BJ (cell line): ENCODE measurements at regions of chr5 and their contacts with region 1.

Region 1: DNA sequence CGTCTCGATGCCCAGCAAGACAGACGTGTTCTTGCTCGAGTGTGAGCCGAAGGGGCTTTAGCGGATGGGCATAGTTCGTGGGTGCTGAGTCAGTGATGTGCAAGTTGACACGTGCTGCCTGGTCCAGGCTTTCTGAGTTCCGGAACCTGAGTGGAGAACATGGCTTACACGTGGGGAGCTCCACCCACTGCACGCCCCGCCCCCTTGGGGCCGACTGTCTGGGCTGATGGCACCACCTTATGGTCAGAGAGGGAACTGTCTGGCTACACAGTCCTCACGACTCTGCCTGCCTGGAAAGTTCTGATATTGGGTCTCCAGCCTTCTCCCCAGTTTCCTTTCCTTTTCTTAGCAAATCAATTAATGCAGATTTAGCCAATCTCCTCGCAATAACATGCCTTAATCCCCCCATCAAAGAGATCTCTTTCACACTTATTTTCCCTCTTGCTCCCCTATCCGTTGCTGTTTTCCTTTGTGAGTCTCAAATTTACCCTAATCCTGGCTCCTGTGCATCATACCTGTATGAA is 3.8 kb upstream of the STC2 start:
- DNase-seq: no peak
- H3K4me3 ChIP-seq: no peak overlapping the region
- H3K27me3 ChIP-seq: no peaks in the 10 kb centered on the region
- CTCF ChIP-seq: peak; percentile 89

Region 2: DNA sequence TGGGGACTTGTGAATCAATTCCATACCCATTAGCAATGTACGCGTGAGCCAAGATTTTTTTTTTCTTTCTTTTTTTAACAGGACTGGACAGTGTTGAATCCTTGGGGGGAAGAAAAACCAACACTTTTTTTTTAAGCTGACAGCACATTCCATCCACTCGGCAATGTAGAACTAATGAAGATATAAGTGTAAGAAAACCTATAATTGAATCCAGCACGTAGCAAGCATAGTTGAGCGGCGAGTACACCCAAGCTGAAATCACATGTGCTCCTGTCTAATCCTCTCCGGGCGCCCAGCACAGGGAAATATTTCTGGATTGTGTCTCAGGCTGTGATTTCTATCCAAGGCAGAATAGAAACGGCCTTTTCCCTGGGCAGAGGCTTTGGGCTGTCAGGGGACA is 166.3 kb after region 1 on chr5:
- CTCF ChIA-PET with region 1: interaction called, 3 read pairs
- POLR2A ChIA-PET with region 1: interaction called, 10 read pairs
- DNase-seq: peak; percentile 74
- H3K4me3 ChIP-seq: no peak overlapping the region
- H3K27me3 ChIP-seq: no peaks in the 10 kb centered on the region
- CTCF ChIP-seq: no peak

Region 3: DNA sequence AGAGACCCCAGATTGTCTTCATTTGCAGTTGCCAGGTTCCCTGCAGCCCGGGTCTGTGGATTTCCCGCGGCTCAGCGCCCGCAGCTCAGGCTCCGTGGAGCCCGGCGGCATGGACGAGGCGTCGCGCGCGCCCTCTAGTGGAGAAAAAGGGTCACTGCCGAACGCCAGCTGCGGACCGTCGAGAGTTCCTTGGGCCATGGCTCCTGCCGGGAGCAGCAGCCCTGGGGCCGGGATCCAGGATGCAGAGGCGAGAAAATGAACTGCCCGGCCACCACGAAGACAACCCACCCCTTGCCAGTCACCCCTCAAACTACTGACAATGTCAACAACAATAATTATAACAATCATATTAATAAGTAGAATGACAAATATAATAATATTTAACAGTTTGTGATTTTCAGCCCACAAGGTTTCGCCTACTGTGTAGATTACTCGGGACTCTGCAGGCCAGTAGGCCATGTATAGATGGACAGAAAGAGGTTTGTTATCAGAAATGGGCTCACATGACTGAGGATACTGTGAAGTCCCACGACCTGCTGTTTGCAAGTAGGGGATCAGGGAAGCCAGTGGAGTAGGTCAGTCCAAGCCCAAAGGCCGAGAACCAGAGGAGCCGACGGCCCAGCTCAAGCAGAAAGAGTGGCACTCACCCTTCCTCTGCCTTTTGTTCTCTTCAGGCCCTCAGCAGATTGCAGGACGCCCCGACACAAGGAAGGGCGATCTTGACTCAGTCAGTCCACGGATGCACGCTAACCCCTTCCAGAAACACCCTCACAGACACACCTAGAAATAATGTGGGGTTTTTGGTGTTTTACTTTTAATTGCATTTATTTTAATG is 241.3 kb after region 1 on chr5:
- CTCF ChIA-PET with region 1: interaction called, 10 read pairs
- POLR2A ChIA-PET with region 1: interaction called, 3 read pairs
- DNase-seq: no peak
- H3K4me3 ChIP-seq: peak overlapping the region; percentile 6; the same call in 1 of the 2 replicates
- H3K27me3 ChIP-seq: no peaks in the 10 kb centered on the region
- CTCF ChIP-seq: peak; percentile 97